ENCODE measurements at regions of chr10 and their contacts with region 1.

Region 1: GRCh38 chr10:6401562-6402348 is 178.3 kb downstream of the PRKCQ start:
- DNase-seq: peak; percentile 92
- ATAC-seq: peak; percentile 86
- H3K4me3 ChIP-seq: peak overlapping the region; percentile 3; the same call in 1 of the 2 replicates
- H3K27ac ChIP-seq: peak overlapping the region; percentile 46; the same call in 1 of the 2 replicates
- H3K4me1 ChIP-seq: peaks cover 19% of the 10 kb centered on the region
- H3K27me3 ChIP-seq: no peaks in the 10 kb centered on the region; the same call in 1 of the 2 replicates
- CTCF ChIP-seq: peak; percentile 83
- POLR2A ChIP-seq: peak; percentile 52; the same call in 1 of the 2 replicates
- RAD21 ChIP-seq: peak; percentile 91

Region 2: GRCh38 chr10:5948999-5949759 is 452.6 kb before region 1 on chr10:
- CTCF ChIA-PET with region 1: interaction called, 7 read pairs
- POLR2A ChIA-PET with region 1: interaction called, 3 read pairs
- dilution Hi-C with region 1: no loop called
- in situ Hi-C with region 1: no loop called
- intact Hi-C with region 1: loop called (anchors 2 kb)
- DNase-seq: peak; percentile 71
- ATAC-seq: peak; percentile 53
- H3K4me3 ChIP-seq: no peak overlapping the region
- H3K27ac ChIP-seq: no peak overlapping the region
- H3K4me1 ChIP-seq: peaks cover 26% of the 10 kb centered on the region
- H3K27me3 ChIP-seq: no peaks in the 10 kb centered on the region
- CTCF ChIP-seq: peak; percentile 66
- POLR2A ChIP-seq: no peak
- RAD21 ChIP-seq: peak; percentile 79

Region 3: DNA sequence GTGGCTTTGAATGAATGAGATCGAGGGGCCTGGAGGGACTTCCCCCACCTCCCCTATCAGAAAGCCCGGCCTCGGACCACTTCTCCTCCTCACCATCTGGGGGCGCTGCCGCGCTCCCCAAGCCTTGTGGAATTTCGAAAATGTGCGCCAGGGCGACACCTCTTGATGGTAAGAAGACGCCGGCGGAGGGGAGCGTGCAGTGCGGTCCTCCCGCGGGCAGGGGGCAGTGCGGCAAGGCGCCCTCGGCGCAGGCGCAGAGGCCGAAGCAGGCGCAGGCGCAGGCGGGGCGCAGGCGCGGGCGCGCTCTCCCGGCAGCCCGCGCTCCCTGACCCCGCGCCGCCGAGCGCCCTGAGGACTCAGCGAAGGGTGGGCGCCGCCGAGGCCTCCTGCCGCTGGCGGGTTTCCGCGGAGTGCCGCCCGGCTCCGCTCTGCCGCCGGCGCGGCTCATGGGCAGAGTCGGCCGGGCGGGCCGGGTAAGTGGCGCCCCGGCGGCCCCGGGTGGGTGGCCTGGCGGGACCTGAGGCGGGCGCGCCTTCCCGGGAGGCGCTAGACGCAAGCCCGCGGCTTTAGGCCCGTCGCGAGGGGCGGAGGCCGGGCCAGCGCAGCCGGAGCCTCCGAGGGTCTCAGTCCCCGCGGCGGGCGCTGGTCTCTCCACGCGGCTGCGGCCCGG is 312.9 kb before region 1 on chr10 and contains the start of gene RBM17:
- CTCF ChIA-PET with region 1: interaction called, 12 read pairs
- POLR2A ChIA-PET with region 1: no interaction called
- dilution Hi-C with region 1: no loop called
- in situ Hi-C with region 1: no loop called
- intact Hi-C with region 1: loop called (anchors 1 kb)
- DNase-seq: peak; percentile 97
- ATAC-seq: peak; percentile 96
- H3K4me3 ChIP-seq: peak within 1 kb of the TSS; percentile 99
- H3K27ac ChIP-seq: peak within 1 kb of the TSS; percentile 91
- H3K4me1 ChIP-seq: peaks cover 14% of the 10 kb centered on the region
- H3K27me3 ChIP-seq: no peaks in the 10 kb centered on the region
- CTCF ChIP-seq: peak; percentile 100
- POLR2A ChIP-seq: peak; percentile 50; the same call in 1 of the 2 replicates
- RAD21 ChIP-seq: peak; percentile 68
- total RNA-seq, gene RBM17: 24.6 and 35.6 TPM in 2 replicates

Region 4: DNA sequence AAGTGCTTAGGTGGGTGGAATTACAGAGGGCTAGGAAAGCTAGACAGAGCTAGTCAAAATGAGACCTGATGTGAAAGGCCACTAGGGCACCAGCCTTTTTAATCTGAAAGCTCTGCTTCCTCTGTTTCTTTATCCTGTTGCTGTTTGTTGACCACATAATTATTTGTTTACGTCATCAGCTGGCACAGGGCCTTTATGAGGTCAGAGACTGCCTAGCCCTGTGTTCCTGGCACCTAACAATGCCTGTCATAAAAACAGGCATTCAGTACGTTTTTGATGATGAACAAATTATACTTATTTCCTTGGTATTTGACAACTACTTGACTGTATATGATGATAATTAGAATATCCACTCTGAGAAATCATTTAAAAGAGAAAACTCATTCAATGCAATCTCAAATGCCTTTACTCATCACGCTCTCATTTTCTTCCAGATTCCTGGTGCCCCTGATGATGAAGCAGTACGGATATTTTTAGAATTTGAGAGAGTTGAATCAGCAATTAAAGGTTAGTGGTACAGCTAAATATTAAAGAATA is 286.9 kb before region 1 on chr10:
- CTCF ChIA-PET with region 1: interaction called, 28 read pairs
- POLR2A ChIA-PET with region 1: no interaction called
- dilution Hi-C with region 1: no loop called
- in situ Hi-C with region 1: loop called (anchors 5 kb)
- intact Hi-C with region 1: loop called (anchors 1 kb)
- DNase-seq: peak; percentile 59
- ATAC-seq: peak; percentile 25; the same call in 1 of the 2 replicates
- H3K4me3 ChIP-seq: no peak overlapping the region
- H3K27ac ChIP-seq: peak overlapping the region; percentile 19; the same call in 1 of the 2 replicates
- H3K4me1 ChIP-seq: peaks cover 14% of the 10 kb centered on the region
- H3K27me3 ChIP-seq: no peaks in the 10 kb centered on the region
- CTCF ChIP-seq: no peak
- POLR2A ChIP-seq: no peak
- RAD21 ChIP-seq: no peak

Region 5: GRCh38 chr10:6211671-6212635 is 189.8 kb before region 1 on chr10:
- CTCF ChIA-PET with region 1: interaction called, 13 read pairs
- POLR2A ChIA-PET with region 1: interaction called, 5 read pairs
- dilution Hi-C with region 1: no loop called
- in situ Hi-C with region 1: no loop called
- intact Hi-C with region 1: no loop called
- DNase-seq: peak; percentile 46
- ATAC-seq: no peak
- H3K4me3 ChIP-seq: no peak overlapping the region
- H3K27ac ChIP-seq: no peak overlapping the region; the same call in 1 of the 2 replicates
- H3K4me1 ChIP-seq: peaks cover 18% of the 10 kb centered on the region; the same call in 1 of the 2 replicates
- H3K27me3 ChIP-seq: no peaks in the 10 kb centered on the region
- CTCF ChIP-seq: no peak
- POLR2A ChIP-seq: no peak
- RAD21 ChIP-seq: no peak

Region 6: GRCh38 chr10:6247041-6247712 is 154.6 kb before region 1 on chr10:
- CTCF ChIA-PET with region 1: interaction called, 3 read pairs
- POLR2A ChIA-PET with region 1: no interaction called
- dilution Hi-C with region 1: no loop called
- in situ Hi-C with region 1: no loop called
- intact Hi-C with region 1: loop called (anchors 10 kb)
- DNase-seq: no peak
- ATAC-seq: no peak
- H3K4me3 ChIP-seq: no peak overlapping the region
- H3K27ac ChIP-seq: no peak overlapping the region
- H3K4me1 ChIP-seq: peaks cover 9% of the 10 kb centered on the region
- H3K27me3 ChIP-seq: no peaks in the 10 kb centered on the region
- CTCF ChIP-seq: no peak
- POLR2A ChIP-seq: no peak
- RAD21 ChIP-seq: no peak